ENCODE measurements at regions of chr7 and their contacts with region 1.

Region 1: DNA sequence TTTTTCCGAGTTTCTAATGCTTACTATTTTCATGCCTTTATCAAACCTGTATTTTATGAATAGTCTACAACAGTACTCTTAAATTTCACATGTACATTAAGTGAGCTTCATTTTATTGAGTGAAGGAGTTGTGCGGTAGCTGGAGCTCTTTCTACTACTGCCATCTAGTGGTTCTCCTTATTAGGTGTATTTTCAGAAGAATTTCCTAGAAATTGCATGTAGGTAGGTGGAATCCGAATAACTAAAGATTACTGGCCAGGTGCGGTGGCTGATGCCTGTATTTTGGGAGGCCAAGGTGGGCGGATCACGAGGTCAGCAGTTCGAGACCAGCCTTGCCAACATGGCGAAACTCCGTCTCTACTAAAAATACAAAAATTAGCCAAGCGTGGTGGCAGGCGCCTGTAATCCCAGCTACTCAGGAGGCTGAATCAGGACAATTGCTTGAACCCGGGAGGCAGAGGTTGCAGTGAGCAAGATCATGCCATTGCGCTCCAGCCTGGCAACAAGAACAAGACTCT is 38.3 kb downstream of the LRRC72 start:
- DNase-seq: no peak
- ATAC-seq: peak; percentile 35
- H3K4me3 Mint-ChIP-seq: no peak overlapping the region
- H3K27ac Mint-ChIP-seq: peak overlapping the region; percentile 19
- H3K4me1 Mint-ChIP-seq: peaks cover 18% of the 10 kb centered on the region
- H3K27me3 Mint-ChIP-seq: peaks cover 12% of the 10 kb centered on the region

Region 2: DNA sequence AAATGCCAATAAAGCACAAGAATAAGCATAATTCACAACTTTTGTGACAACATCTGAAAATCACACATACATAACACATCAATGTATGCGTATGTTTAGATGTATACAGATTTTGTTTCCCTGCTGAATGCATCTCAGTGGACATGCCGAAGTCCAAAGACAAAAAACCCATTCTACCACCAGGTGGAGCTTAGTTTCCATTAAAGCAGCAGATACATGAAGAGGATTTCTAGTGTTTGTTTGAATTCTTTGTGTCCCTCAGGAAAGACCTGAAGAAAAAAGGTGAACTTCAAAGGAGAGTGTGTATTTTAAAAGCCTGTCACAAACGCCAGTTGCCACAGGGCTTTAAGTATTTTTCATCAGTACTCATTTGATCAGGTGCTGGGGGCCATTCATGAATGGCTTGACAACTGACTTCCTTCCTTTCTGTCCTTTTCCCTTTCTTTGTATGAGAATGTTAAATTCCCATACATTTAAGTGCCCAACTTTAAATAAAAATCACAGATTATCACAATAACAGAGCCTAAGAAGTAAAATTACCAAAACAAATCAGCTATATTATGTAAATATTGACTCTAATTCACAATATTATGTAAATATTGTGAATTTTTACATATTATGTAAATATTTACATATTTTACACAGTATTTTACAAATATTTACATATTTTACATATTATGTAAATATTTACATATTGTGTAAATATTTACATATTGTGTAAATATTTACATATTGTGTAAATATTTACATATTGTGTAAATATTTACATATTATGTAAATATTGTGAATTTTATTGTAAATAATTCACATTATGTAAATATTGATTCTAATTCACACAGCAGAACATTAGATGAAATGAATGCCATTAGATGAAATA is 486.7 kb before region 1 on chr7:
- CTCF ChIA-PET with region 1: interaction called, 18 read pairs
- DNase-seq: no peak
- ATAC-seq: peak; percentile 49
- H3K4me3 Mint-ChIP-seq: no peak overlapping the region
- H3K27ac Mint-ChIP-seq: no peak overlapping the region
- H3K4me1 Mint-ChIP-seq: peaks cover 11% of the 10 kb centered on the region
- H3K27me3 Mint-ChIP-seq: no peaks in the 10 kb centered on the region

Region 3: GRCh38 chr7:16420649-16421332 is 144.2 kb before region 1 on chr7:
- CTCF ChIA-PET with region 1: interaction called, 20 read pairs
- DNase-seq: peak; percentile 93
- ATAC-seq: peak; percentile 91
- H3K4me3 Mint-ChIP-seq: peak overlapping the region; percentile 81
- H3K27ac Mint-ChIP-seq: peak overlapping the region; percentile 99
- H3K4me1 Mint-ChIP-seq: peaks cover 28% of the 10 kb centered on the region
- H3K27me3 Mint-ChIP-seq: no peaks in the 10 kb centered on the region

Region 4: DNA sequence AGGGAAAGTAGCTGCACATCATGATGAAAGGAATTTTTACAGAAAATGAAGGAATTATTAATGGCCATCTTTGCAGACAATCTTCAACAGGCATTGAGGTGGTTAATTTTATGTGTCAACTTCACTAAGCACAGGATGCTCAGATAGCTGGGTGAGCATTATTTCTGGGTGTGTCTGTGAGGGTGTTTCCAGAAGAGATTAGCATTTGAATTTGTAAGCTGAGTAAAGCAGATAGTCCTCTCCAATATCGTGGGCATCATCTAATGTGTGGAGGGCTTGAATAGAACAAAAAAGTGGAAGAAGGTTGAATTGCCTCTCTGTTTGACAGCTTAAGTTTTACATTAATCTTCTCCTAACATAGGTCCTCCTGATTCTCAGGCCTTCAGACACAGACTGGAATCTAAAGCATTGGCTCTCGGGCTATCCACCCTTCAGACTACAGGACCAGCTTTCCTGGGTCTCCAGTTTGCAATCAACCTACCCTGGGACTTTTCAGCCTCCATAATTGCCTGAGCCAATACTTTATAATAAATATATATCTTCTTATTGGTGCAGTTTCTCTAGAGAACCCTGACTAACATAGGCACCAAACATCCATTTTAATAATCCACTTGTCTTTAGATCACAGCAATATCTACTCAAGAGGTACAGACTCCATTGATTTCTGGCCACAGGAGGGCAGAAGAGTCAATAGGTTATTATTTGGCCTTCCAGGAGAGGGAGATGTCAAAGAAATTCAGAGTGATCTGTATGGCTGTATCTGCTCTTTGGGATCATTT is 133.1 kb before region 1 on chr7:
- CTCF ChIA-PET with region 1: interaction called, 49 read pairs
- DNase-seq: peak; percentile 43
- ATAC-seq: peak; percentile 76
- H3K4me3 Mint-ChIP-seq: no peak overlapping the region
- H3K27ac Mint-ChIP-seq: no peak overlapping the region
- H3K4me1 Mint-ChIP-seq: peaks cover 8% of the 10 kb centered on the region
- H3K27me3 Mint-ChIP-seq: no peaks in the 10 kb centered on the region

Region 5: DNA sequence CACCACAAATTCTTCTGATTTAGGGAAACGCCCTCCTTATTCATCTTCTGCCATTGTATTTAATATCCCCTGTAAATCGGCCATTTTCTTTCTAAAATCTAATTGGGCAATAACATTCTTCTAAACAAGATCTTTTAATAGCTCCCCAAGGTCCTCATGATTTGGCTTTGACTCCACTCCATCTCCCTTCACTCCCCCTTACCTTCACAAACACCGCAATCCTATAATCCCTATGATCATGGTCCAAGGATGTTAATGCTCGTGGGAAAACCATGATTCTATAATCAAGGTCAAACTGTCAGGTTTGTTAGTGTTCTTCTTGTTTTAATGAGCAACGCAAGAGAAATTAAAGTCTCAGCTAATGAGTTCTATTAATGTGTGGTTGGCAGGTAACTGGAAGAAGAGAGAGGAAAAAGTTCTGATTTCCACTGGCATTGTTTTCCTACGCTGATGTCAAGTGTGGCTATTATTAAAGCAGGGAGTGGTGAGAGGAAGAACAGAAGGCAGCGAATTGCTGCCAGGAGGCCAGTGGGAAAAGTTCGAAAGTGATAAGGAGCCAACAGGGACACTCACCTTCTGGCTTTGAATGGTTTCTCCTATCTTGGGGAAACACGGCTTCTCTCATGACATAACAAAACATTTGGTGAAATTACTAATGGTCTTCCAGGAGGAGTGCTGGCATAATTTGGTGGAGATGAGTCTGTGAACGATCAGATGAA is 10.3 kb before region 1 on chr7:
- CTCF ChIA-PET with region 1: interaction called, 11 read pairs
- DNase-seq: no peak
- ATAC-seq: no peak
- H3K4me3 Mint-ChIP-seq: no peak overlapping the region
- H3K27ac Mint-ChIP-seq: no peak overlapping the region
- H3K4me1 Mint-ChIP-seq: no peaks in the 10 kb centered on the region
- H3K27me3 Mint-ChIP-seq: peaks cover 7% of the 10 kb centered on the region

Region 6: DNA sequence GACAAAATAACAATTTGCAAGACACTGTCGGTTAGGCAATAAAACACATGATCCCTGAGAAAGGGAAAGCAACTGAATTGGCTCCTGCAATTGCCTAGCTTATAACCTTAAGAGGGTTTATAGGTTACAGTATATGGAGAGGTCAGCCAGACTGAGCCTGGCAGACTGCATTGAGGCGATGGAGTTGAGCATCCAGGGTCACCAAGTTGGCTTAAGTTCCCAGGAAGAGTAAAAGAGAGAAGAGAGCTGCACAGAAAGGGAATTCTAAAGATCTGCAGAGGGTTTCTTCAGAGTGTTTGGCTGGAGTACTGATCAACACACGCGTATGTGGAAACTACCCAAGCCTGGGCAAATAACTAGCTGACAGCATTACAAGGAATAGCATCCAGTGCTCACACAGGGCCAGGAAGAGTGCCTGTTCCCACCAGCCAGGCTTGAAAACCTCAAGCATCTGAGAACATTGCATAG is 69.3 kb after region 1 on chr7:
- CTCF ChIA-PET with region 1: no interaction called
- DNase-seq: no peak
- ATAC-seq: no peak
- H3K4me3 Mint-ChIP-seq: no peak overlapping the region
- H3K27ac Mint-ChIP-seq: no peak overlapping the region
- H3K4me1 Mint-ChIP-seq: no peaks in the 10 kb centered on the region
- H3K27me3 Mint-ChIP-seq: no peaks in the 10 kb centered on the region